ENCODE measurements at regions of chr15 and their contacts with region 1.

Region 1: GRCh38 chr15:45399381-45400212 is 21.3 kb upstream of the GATM start:
- DNase-seq: peak; percentile 87

Region 2: GRCh38 chr15:45200001-45200798 is 199.4 kb before region 1 on chr15:
- in situ Hi-C with region 1: loop called (anchors 10 kb)
- DNase-seq: peak; percentile 99

Region 3: DNA sequence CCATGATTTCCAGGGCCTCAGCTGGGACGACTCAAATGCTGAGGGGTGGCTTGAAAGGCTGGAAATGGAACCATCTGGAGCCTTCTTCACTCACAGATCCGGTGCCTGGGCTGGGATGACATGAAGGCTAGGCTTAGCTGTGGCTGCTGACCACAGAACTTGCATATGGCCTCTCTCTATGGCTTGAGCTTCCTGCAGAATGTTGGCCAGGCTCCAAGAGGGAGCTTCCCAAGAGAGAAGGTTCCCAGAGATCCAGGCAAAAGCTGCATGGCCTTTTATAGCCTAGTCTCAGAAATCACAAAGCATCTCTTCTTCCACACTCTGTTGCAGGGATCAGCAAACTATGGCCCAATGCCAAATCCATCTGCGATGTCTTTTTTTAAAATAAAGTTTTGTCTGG is 66.0 kb before region 1 on chr15:
- in situ Hi-C with region 1: no loop called
- DNase-seq: peak; percentile 63